IMR-90 (cell line): ENCODE measurements at regions of chr11 and their contacts with region 1.

Region 1: GRCh38 chr11:14643697-14644225 is at the start of gene PDE3B:
- DNase-seq: peak; percentile 27
- ATAC-seq: peak; percentile 83
- H3K4me3 ChIP-seq: peak within 1 kb of the TSS; percentile 56
- H3K27ac ChIP-seq: peak within 1 kb of the TSS; percentile 67; the same call in 1 of the 2 replicates
- H3K4me1 ChIP-seq: no peaks in the 10 kb centered on the region
- H3K27me3 ChIP-seq: no peaks in the 10 kb centered on the region; the same call in 1 of the 2 replicates
- CTCF ChIP-seq: no peak
- POLR2A ChIP-seq: no peak
- RAD21 ChIP-seq: no peak
- total RNA-seq, gene PDE3B: 1.1 and 1.3 TPM in 2 replicates

Region 2: GRCh38 chr11:14544611-14545010 is 99.2 kb before region 1 on chr11:
- CTCF ChIA-PET with region 1: no interaction called
- POLR2A ChIA-PET with region 1: no interaction called
- dilution Hi-C with region 1: no loop called
- in situ Hi-C with region 1: no loop called
- intact Hi-C with region 1: loop called (anchors 5 kb)
- DNase-seq: peak; percentile 33
- ATAC-seq: no peak
- H3K4me3 ChIP-seq: no peak overlapping the region
- H3K27ac ChIP-seq: no peak overlapping the region
- H3K4me1 ChIP-seq: no peaks in the 10 kb centered on the region
- H3K27me3 ChIP-seq: peaks cover 2% of the 10 kb centered on the region
- CTCF ChIP-seq: no peak
- POLR2A ChIP-seq: no peak
- RAD21 ChIP-seq: no peak